Dorsolateral prefrontal cortex (tissue), 120 donors: ENCODE measurements at regions of chr3 and their contacts with region 1.

Region 1: GRCh38 chr3:90091204-90091924 is 983.9 kb downstream of the EPHA3 start:
- DNase-seq: peak in 3 of 10 donors; percentile 5 to 41 (median 17)
- H3K4me3 ChIP-seq: peak overlapping the region in 3 of 59 donors; percentile 8 to 26 (median 15)
- H3K27ac ChIP-seq: no peak overlapping the region
- H3K27me3 ChIP-seq: no peaks in the 10 kb centered on the region
- CTCF ChIP-seq: peak in 54 of 56 donors; percentile 34 to 80 (median 65)

Region 2: GRCh38 chr3:88219138-88219792 is 1872.1 kb before region 1 on chr3:
- intact Hi-C with region 1: loop called in 1 of 2 experiments (anchors 10 kb)
- DNase-seq: peak in 8 of 10 donors; percentile 11 to 76 (median 50)
- H3K4me3 ChIP-seq: no peak overlapping the region
- H3K27ac ChIP-seq: no peak overlapping the region
- H3K27me3 ChIP-seq: no peaks in the 10 kb centered on the region
- CTCF ChIP-seq: peak in 53 of 56 donors; percentile 43 to 76 (median 60)